Activated T-helper 1 cell treated with anti-CD3 and anti-CD28 coated beads, Interleukin-12 subunit alpha, Interleukin-12 subunit beta, Interleukin-2, Interleukin-4 antibody, amounts not matched to agents 30 ng/mL and 10 ng/mL and 1 ng/mL, durations not matched to agents 14 hours and 24 hours and 36 hours (primary cell): ENCODE measurements at regions of chr11 and their contacts with region 1.

Region 1: GRCh38 chr11:47426061-47426956 is at the start of gene PSMC3:
- DNase-seq: peak; percentile 96
- H3K4me3 Mint-ChIP-seq: peak within 1 kb of the TSS; percentile 95
- H3K27ac Mint-ChIP-seq: peak within 1 kb of the TSS; percentile 96
- H3K4me1 Mint-ChIP-seq: peaks cover 28% of the 10 kb centered on the region
- H3K27me3 Mint-ChIP-seq: no peaks in the 10 kb centered on the region
- total RNA-seq, gene PSMC3: 219 and 222 TPM in 2 replicates

Region 2: GRCh38 chr11:46112961-46113617 is 1313.2 kb before region 1 on chr11:
- intact Hi-C with region 1: no loop called
- DNase-seq: peak; percentile 20
- H3K4me3 Mint-ChIP-seq: no peak overlapping the region
- H3K27ac Mint-ChIP-seq: no peak overlapping the region
- H3K4me1 Mint-ChIP-seq: peaks cover 44% of the 10 kb centered on the region
- H3K27me3 Mint-ChIP-seq: no peaks in the 10 kb centered on the region

Region 3: DNA sequence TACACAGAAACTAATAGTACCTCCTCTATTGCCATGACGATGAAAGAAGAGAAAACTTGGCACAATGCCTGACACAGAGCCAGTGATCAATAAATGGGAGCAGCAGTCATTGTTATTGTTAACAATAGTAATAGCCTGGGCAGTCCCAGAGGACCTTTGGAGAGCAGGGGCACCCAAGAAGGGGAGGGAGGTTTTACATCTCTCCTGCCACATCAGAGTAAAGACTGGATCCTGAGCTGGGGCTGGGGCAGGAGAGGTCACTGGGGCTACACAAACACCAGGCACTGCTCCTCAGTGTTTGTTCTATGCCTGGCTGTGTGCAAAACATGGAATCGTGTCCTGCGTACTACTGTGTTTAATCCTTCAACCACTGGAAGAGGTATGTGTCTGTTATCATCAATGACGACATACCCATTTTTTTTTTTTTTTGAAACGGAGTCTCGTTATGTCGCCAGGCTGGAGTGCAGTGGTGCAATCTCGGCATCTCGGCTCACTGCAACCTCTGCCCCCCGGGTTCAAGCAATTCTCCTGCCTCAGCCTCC is 1173.9 kb before region 1 on chr11:
- intact Hi-C with region 1: no loop called
- DNase-seq: no peak
- H3K4me3 Mint-ChIP-seq: no peak overlapping the region
- H3K27ac Mint-ChIP-seq: no peak overlapping the region
- H3K4me1 Mint-ChIP-seq: peaks cover 14% of the 10 kb centered on the region
- H3K27me3 Mint-ChIP-seq: peaks cover 6% of the 10 kb centered on the region

Region 4: DNA sequence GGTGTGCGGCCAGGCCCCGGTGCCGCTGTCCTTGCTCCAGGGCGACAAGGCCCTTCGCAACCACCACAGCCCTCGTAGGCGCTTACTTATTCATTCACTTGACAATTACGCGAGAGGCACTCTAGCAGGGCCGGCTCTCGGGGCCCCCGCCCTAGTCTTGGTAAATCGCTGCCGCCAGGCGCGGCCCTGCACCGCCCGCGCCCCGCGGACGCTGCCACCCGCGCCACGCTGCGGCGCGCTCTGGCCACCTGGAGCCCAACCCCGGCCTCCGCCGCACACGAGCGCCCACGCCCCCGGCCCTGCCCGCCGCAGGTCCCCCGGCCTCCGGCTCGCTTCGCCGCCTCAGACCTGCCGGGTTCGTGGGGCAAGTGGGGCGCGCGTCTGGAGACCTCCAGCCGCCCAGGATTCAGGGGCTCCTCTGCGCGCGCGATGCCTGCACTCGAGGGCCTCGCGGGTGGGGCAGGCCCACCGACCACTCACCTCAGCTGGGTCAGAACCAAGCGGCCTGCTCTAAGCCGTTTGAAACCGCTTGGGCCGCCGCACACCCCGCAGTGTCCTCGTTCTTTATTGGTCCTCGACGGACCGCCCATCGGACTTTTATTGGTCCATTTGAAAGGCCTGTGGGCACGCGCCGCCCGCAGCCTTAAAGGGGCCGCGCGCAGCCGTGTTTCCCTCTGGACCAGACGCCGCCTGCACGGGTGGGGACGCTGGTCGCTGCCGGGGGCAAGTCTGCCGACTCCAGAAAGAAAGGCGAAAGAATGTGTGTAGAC is 580.4 kb before region 1 on chr11 and contains the start of gene CKAP5:
- intact Hi-C with region 1: loop called (anchors 5 kb)
- DNase-seq: peak; percentile 87
- H3K4me3 Mint-ChIP-seq: peak within 1 kb of the TSS; percentile 98
- H3K27ac Mint-ChIP-seq: peak within 1 kb of the TSS; percentile 98
- H3K4me1 Mint-ChIP-seq: peaks cover 41% of the 10 kb centered on the region
- H3K27me3 Mint-ChIP-seq: peaks cover 4% of the 10 kb centered on the region
- total RNA-seq, gene CKAP5: 121 TPM in 2 replicates

Region 5: GRCh38 chr11:47213985-47214564 is 212.2 kb before region 1 on chr11:
- intact Hi-C with region 1: loop called (anchors 1 kb)
- DNase-seq: peak; percentile 77
- H3K4me3 Mint-ChIP-seq: peak overlapping the region; percentile 96
- H3K27ac Mint-ChIP-seq: peak overlapping the region; percentile 100
- H3K4me1 Mint-ChIP-seq: peaks cover 45% of the 10 kb centered on the region
- H3K27me3 Mint-ChIP-seq: peaks cover 2% of the 10 kb centered on the region

Region 6: GRCh38 chr11:47394322-47395222 is 31.7 kb before region 1 on chr11:
- intact Hi-C with region 1: loop called (anchors 1 kb)
- DNase-seq: peak; percentile 53
- H3K4me3 Mint-ChIP-seq: no peak overlapping the region
- H3K27ac Mint-ChIP-seq: peak overlapping the region; percentile 87
- H3K4me1 Mint-ChIP-seq: peaks cover 10% of the 10 kb centered on the region
- H3K27me3 Mint-ChIP-seq: no peaks in the 10 kb centered on the region

Region 7: GRCh38 chr11:47552566-47553416 is 126.5 kb after region 1 on chr11 and contains the start of gene CELF1:
- intact Hi-C with region 1: loop called (anchors 1 kb)
- DNase-seq: peak; percentile 92
- H3K4me3 Mint-ChIP-seq: peak within 1 kb of the TSS; percentile 99
- H3K27ac Mint-ChIP-seq: peak within 1 kb of the TSS; percentile 97
- H3K4me1 Mint-ChIP-seq: peaks cover 40% of the 10 kb centered on the region
- H3K27me3 Mint-ChIP-seq: no peaks in the 10 kb centered on the region
- total RNA-seq, gene CELF1: 148 and 155 TPM in 2 replicates

Region 8: GRCh38 chr11:47715082-47715669 is 288.9 kb after region 1 on chr11 and contains the start of gene AGBL2:
- intact Hi-C with region 1: loop called (anchors 1 kb)
- DNase-seq: peak; percentile 84
- H3K4me3 Mint-ChIP-seq: peak within 1 kb of the TSS; percentile 93
- H3K27ac Mint-ChIP-seq: peak within 1 kb of the TSS; percentile 96
- H3K4me1 Mint-ChIP-seq: peaks cover 31% of the 10 kb centered on the region
- H3K27me3 Mint-ChIP-seq: no peaks in the 10 kb centered on the region
- total RNA-seq, gene AGBL2: 3.2 and 5.5 TPM in 2 replicates